CD4-positive, alpha-beta T cell (primary cell): ENCODE measurements at regions of chr2 and their contacts with region 1.

Region 1: DNA sequence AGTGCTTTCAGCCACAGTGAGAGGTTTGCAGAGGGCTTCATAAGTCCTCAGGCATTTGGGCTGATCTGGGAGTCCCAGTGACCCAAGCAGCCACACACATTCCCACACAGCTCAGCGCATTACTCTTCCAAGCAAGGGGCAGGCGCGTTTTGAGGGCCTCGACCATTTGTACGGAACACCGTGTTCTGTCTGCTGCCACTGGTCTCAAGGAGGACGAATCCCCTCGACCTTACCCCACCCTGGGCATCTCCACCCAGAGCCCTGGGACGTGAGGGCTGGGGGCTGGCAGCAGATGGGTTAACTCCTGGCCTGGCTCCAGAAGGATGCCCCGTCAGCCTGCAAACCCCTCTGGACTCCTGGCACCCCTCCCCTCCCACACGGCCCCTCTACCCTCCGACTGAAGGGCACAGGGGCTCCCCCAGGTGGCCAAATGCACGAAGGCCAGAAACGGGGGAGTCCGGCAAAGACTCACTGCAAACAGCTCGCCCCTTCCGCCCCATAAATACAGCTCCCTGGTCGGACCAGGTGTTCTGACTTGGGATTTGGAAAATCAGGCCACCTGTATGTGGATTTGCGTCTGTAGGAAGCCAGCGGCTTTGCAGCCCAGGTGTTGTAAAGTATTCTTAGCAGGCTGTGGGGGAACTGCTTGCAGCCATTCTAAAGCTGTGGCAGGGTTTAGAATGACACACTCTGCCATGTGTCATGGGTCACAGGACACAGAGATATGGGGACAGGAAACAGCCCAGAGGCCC is 33.6 kb upstream of the PTMA start:
- DNase-seq: peak; percentile 22 to 75 (median 46)
- ATAC-seq: peak; percentile 50
- H3K4me3 ChIP-seq: no peak overlapping the region
- H3K4me3 Mint-ChIP-seq: no peak overlapping the region
- H3K27ac ChIP-seq: no peak overlapping the region
- H3K27ac Mint-ChIP-seq: no peak overlapping the region
- H3K4me1 ChIP-seq: peaks cover 15% of the 10 kb centered on the region
- H3K4me1 Mint-ChIP-seq: peaks cover 5% of the 10 kb centered on the region
- H3K27me3 ChIP-seq: peaks cover 0 to under 1% of the 10 kb centered on the region in 2 experiments
- H3K27me3 Mint-ChIP-seq: peaks cover 4% of the 10 kb centered on the region
- CTCF ChIP-seq: peak; percentile 72

Region 2: GRCh38 chr2:231612179-231613053 is 62.3 kb before region 1 on chr2:
- CTCF ChIA-PET with region 1: interaction called, 27 read pairs
- POLR2A ChIA-PET with region 1: interaction called, 9 read pairs
- intact Hi-C with region 1: loop called (anchors 1 kb)
- DNase-seq: peak; percentile 79 to 93 (median 86)
- ATAC-seq: peak; percentile 78
- H3K4me3 ChIP-seq: peak overlapping the region; percentile 59
- H3K4me3 Mint-ChIP-seq: peak overlapping the region; percentile 90
- H3K27ac ChIP-seq: no peak overlapping the region
- H3K27ac Mint-ChIP-seq: peak overlapping the region; percentile 74
- H3K4me1 ChIP-seq: peaks cover 34% of the 10 kb centered on the region
- H3K4me1 Mint-ChIP-seq: peaks cover 47% of the 10 kb centered on the region
- H3K27me3 ChIP-seq: no peaks in the 10 kb centered on the region
- H3K27me3 Mint-ChIP-seq: no peaks in the 10 kb centered on the region
- CTCF ChIP-seq: peak; percentile 89

Region 3: GRCh38 chr2:231648587-231649174 is 26.1 kb before region 1 on chr2:
- CTCF ChIA-PET with region 1: interaction called, 6 read pairs
- POLR2A ChIA-PET with region 1: no interaction called
- intact Hi-C with region 1: loop called in 1 of 2 experiments (anchors 1 kb)
- DNase-seq: peak in 10 of 14 experiments; percentile 28 to 73 (median 46)
- ATAC-seq: peak; percentile 72
- H3K4me3 ChIP-seq: no peak overlapping the region
- H3K4me3 Mint-ChIP-seq: no peak overlapping the region
- H3K27ac ChIP-seq: no peak overlapping the region
- H3K27ac Mint-ChIP-seq: no peak overlapping the region
- H3K4me1 ChIP-seq: no peaks in the 10 kb centered on the region
- H3K4me1 Mint-ChIP-seq: peaks cover 4% of the 10 kb centered on the region
- H3K27me3 ChIP-seq: no peaks in the 10 kb centered on the region
- H3K27me3 Mint-ChIP-seq: no peaks in the 10 kb centered on the region
- CTCF ChIP-seq: peak; percentile 48

Region 4: DNA sequence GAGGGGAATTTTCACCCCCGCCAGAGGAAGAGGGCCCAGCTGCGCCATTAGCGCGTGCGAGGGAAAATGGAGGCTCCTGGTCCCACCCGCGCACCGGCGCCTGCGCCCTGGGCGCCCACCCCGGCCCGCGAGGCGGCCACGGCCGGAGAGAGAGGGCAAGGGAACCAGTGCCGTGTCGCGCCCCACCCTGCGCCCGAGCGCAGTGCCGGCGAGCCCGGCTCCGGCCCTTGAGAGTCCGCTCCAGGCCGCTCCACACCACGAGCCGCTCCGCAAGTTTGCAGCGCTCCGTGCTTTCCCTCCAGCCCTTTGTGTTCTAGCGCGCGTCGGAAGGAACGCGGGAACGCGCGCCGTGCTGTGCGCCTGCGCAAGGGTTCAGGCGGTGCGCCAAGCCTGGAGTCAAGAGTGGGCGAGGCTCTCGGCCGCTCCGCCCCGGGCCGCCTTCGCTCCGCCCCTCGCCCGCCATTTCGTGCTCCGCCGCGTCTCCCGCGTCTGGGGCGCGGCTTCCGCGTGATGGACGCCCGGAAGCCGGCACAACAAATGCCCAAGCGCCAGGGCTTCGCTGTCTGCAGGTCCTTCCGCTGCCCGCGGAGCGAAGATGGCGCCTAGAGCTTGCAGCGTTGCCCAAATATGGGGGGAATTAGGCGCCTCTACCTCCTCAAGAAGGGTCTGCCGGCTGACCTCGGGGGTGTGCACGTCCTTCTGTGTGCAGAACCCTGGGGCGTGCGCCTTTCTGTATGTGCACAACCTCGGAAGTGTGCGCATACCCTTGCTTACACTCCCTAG is 12.5 kb before region 1 on chr2:
- CTCF ChIA-PET with region 1: interaction called, 6 read pairs
- POLR2A ChIA-PET with region 1: interaction called, 17 read pairs
- intact Hi-C with region 1: loop called in 1 of 2 experiments (anchors 1 kb)
- DNase-seq: peak; percentile 92 to 99 (median 97)
- ATAC-seq: peak; percentile 89
- H3K4me3 ChIP-seq: peak overlapping the region; percentile 57
- H3K4me3 Mint-ChIP-seq: peak overlapping the region; percentile 73
- H3K27ac ChIP-seq: peak overlapping the region; percentile 80 to 96
- H3K27ac Mint-ChIP-seq: peak overlapping the region; percentile 94
- H3K4me1 ChIP-seq: peaks cover 35% of the 10 kb centered on the region
- H3K4me1 Mint-ChIP-seq: peaks cover 17% of the 10 kb centered on the region
- H3K27me3 ChIP-seq: no peaks in the 10 kb centered on the region
- H3K27me3 Mint-ChIP-seq: no peaks in the 10 kb centered on the region
- CTCF ChIP-seq: no peak

Region 5: GRCh38 chr2:231687133-231687852 is 12.5 kb after region 1 on chr2:
- CTCF ChIA-PET with region 1: interaction called, 9 read pairs
- POLR2A ChIA-PET with region 1: no interaction called
- intact Hi-C with region 1: loop called in 1 of 2 experiments (anchors 1 kb)
- DNase-seq: peak; percentile 42 to 81 (median 66)
- ATAC-seq: peak; percentile 90
- H3K4me3 ChIP-seq: no peak overlapping the region
- H3K4me3 Mint-ChIP-seq: no peak overlapping the region
- H3K27ac ChIP-seq: no peak overlapping the region
- H3K27ac Mint-ChIP-seq: no peak overlapping the region
- H3K4me1 ChIP-seq: peaks cover 6% of the 10 kb centered on the region
- H3K4me1 Mint-ChIP-seq: peaks cover 5% of the 10 kb centered on the region
- H3K27me3 ChIP-seq: no peaks in the 10 kb centered on the region
- H3K27me3 Mint-ChIP-seq: peaks cover 8% of the 10 kb centered on the region
- CTCF ChIP-seq: peak; percentile 75

Region 6: DNA sequence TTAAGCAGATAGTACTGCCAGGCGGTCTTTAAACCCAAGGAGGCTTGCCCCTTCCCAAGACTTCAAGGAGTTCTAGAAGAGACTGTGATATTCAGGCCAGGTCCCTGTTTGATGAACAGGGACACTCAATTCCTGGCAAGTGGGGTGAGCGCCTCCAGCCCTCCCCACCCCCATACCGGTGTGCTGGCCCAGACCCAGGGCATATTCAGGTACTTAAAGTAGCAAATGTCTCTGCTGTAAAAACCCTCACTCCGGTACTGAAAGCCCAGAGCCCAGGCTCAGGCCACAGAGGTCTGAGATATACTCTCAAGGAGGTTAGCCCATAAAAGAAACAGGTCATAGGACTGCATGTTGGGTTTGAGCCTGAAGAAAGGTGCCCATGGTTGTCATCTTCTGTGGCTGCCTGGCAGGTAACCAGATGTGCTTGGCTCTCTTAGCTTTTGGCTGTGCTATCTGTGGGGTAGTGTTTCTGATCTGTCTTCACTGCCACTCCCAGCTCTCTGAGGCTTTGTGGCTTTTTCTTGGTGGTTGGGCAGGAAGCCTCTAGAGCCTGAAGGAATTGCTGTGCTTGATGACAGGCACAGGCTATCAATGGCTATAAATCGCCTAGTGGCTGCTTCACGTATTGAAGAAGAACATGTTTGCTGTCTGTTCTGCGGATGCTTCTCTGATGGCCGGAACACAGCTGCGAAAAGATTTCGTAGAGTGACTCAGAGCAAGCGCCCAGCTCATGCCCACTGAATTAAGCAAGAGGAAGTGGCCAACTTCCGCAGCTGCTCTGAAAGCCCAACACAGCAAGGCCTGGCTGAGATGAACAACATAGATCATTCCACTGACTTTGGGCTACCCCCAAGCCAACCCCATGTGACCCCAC is 640.5 kb after region 1 on chr2:
- CTCF ChIA-PET with region 1: no interaction called
- POLR2A ChIA-PET with region 1: no interaction called
- intact Hi-C with region 1: loop called in 1 of 2 experiments (anchors 10 kb)
- DNase-seq: peak; percentile 44 to 92 (median 67)
- ATAC-seq: peak; percentile 87
- H3K4me3 ChIP-seq: peak overlapping the region; percentile 19
- H3K4me3 Mint-ChIP-seq: peak overlapping the region; percentile 80
- H3K27ac ChIP-seq: peak overlapping the region; percentile 62
- H3K27ac Mint-ChIP-seq: peak overlapping the region; percentile 90
- H3K4me1 ChIP-seq: peaks cover 80% of the 10 kb centered on the region
- H3K4me1 Mint-ChIP-seq: peaks cover 92% of the 10 kb centered on the region
- H3K27me3 ChIP-seq: no peaks in the 10 kb centered on the region
- H3K27me3 Mint-ChIP-seq: no peaks in the 10 kb centered on the region
- CTCF ChIP-seq: peak; percentile 47